ENCODE measurements at regions of chr3 and their contacts with region 1.

Region 1: DNA sequence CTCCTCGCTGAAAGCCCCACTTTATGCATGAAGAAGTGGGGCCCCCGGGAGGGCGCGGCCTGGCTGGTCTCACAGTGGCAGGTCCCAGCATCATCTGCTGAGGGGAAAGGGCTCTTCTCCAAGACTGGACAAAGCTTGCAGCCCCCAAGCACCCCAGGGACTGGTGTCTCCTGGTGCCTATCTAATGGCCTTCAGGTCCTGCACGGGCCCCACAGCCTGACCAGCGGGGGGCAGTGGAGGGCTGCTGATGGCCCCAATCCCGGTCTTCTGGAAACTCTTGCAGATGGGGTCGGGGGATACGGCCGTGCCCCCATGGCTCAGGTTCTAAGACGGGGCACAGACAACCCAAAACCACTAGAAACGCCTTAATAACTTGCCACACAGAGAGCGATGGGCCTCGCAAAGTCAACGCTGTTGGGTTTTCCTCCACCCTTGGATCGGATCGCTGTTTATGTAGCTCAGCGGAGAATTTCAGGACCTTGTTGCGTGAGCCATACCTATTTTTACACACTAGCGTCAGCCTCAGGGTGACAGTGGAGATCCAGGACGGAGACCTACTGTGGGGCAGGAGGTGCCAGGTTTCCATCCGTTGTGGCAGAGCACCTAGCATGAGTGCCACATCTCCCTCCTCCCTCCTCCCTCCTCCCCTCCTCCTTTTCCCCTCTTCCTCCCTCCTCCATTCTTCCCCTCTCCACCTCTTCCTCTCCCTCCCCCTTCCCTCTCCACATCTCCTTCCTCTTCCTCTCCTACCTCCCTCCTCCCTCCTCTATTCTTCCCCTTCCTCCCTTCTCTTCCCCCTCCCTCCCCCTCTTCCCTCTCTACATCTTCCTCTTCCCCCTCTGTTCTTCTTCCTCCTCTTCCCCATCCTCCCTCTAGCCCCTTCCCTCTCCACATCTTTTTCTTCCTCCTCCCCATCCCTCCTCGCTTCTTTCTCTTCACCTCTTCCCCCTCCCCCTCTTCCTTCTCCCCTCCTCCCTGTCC is 79.3 kb upstream of the ALDH1L1 start:
- DNase-seq: peak; percentile 51 to 76
- ATAC-seq: peak; percentile 73 to 97 (median 93)
- H3K4me3 ChIP-seq: peak overlapping the region in 8 of 10 donors; percentile 4 to 45 (median 36)
- H3K27ac ChIP-seq: peak overlapping the region in 9 of 10 donors; percentile 26 to 79 (median 69)
- H3K4me1 ChIP-seq: peaks cover 0 to 5% (median 0%) of the 10 kb centered on the region in 9 donors
- H3K27me3 ChIP-seq: no peaks in the 10 kb centered on the region
- CTCF ChIP-seq: peak; percentile 59 to 87 (median 74)

Region 2: GRCh38 chr3:126389112-126389793 is 129.6 kb after region 1 on chr3:
- intact Hi-C with region 1: loop called (anchors 1 to 5 kb)
- DNase-seq: peak; percentile 85 to 90
- ATAC-seq: peak; percentile 94 to 98 (median 96)
- H3K4me3 ChIP-seq: peak overlapping the region; percentile 11 to 64 (median 49)
- H3K27ac ChIP-seq: peak overlapping the region; percentile 28 to 87 (median 79)
- H3K4me1 ChIP-seq: peaks cover 0 to 11% (median 5%) of the 10 kb centered on the region in 9 donors
- H3K27me3 ChIP-seq: peaks cover 0 to 23% (median 4%) of the 10 kb centered on the region in 7 donors
- CTCF ChIP-seq: peak; percentile 89 to 100 (median 97)

Region 3: GRCh38 chr3:126394575-126395228 is 135.0 kb after region 1 on chr3 and contains the start of gene CFAP100:
- intact Hi-C with region 1: loop called (anchors 1 to 5 kb)
- DNase-seq: peak; percentile 25 to 41
- ATAC-seq: peak; percentile 4 to 81 (median 62)
- H3K4me3 ChIP-seq: peak within 1 kb of the TSS in 9 of 10 donors; percentile 14 to 43 (median 34)
- H3K27ac ChIP-seq: no peak within 1 kb of the TSS
- H3K4me1 ChIP-seq: peaks cover 0 to 9% (median 3%) of the 10 kb centered on the region in 9 donors
- H3K27me3 ChIP-seq: peaks cover 0 to 42% (median 14%) of the 10 kb centered on the region in 7 donors
- CTCF ChIP-seq: no peak
- total RNA-seq, gene CFAP100: not detected

Region 4: DNA sequence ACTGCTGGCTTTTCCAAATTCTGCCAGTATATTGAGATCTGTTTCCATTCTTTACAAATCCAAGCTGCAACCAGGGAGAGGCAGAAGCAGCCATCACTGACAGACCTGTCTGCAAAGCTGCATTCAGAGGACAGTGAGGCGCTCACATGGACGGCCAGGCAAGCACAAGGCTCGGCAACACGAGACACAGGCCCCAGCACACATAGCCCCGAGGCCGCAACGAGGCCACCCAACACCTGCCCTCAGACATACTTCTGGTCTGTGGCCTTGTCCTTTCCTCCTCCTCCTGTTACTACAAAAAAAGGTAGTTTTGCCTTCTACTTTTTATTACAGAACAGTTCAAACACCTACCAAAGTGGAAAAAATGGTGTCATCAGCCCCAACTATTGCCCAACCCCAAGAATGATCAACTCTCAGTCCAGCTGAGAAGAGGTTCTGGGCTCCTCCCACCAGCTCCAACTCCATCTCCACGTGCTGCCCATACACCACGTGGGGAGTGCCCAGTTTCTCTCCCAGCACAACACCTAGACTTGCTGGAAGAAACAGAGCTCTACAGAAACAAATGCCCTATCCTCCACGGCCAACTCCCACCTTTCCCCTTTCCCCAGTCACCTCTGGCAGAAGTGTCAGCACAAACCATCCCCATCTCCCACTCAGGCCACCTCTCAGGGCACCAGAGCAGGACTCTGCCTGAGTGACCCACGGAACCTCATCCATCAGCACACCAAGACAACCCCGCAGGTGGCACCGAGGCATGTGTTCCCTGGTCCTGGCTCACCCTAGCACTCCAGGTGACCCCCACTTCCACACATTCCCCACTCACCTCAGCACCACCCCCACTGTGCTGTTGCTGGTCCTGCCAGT is 208.6 kb after region 1 on chr3:
- intact Hi-C with region 1: loop called in 4 of 10 experiments (anchors 10 kb)
- DNase-seq: no peak
- ATAC-seq: peak in 3 of 8 donors; percentile 10 to 44 (median 32)
- H3K4me3 ChIP-seq: no peak overlapping the region
- H3K27ac ChIP-seq: peak overlapping the region in 2 of 10 donors; percentile 2 to 37
- H3K4me1 ChIP-seq: peaks cover 15 to 68% (median 47%) of the 10 kb centered on the region in 9 donors
- H3K27me3 ChIP-seq: no peaks in the 10 kb centered on the region
- CTCF ChIP-seq: no peak

Region 5: DNA sequence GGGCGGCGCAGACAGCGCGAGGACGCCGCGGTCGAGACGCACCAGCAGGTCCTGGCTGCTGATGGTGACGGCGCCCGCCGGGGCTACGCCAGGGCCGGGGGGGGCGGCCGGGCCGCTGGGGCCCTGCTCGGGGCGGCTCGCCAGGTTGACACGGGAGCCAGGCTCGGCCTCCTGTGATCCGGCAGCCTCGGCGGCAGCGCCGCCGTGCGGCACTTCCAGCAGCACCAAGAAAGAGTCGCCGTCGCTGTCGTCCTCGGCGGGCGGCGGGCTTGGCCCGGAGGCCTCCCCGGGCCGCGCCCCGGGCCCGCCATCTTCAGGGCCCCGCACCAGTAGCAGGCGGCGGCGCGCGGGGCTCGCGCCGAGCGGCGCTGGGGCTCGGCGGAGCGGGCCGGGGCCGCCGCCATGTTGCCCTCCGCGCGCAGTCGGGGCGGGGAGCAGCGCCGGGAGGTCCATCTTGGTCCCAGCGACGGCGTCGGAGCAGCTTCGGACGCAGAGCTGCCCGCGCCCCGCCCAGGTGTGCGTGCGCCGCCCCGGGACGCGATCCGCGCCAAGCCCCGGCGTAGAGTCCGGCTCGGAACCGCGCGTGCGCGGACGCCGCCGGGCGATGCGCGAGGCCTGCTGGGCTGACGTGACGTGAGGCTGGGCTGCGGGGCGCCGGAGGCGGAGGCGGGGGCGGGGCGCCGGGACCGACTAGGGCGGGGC is 215.9 kb after region 1 on chr3 and contains the start of gene ZXDC:
- intact Hi-C with region 1: loop called in 3 of 10 experiments (anchors 10 kb)
- DNase-seq: peak; percentile 92 to 97
- ATAC-seq: peak; percentile 86 to 96 (median 93)
- H3K4me3 ChIP-seq: peak within 1 kb of the TSS; percentile 62 to 95 (median 80)
- H3K27ac ChIP-seq: peak within 1 kb of the TSS; percentile 83 to 99 (median 92)
- H3K4me1 ChIP-seq: peaks cover 28 to 51% (median 43%) of the 10 kb centered on the region in 9 donors
- H3K27me3 ChIP-seq: no peaks in the 10 kb centered on the region
- CTCF ChIP-seq: peak in 7 of 9 donors; percentile 26 to 74 (median 52)
- total RNA-seq, gene ZXDC: 15.2 to 25.4 (median 19.7) TPM

Measured in heart right ventricle (tissue), 16 donors.